ENCODE measurements at regions of chr1 and their contacts with region 1.

Region 1: GRCh38 chr1:185663332-185663731 is 70.9 kb upstream of the HMCN1 start:
- DNase-seq: no peak
- ATAC-seq: no peak
- H3K4me3 ChIP-seq: no peak overlapping the region
- H3K27ac ChIP-seq: no peak overlapping the region
- H3K4me1 ChIP-seq: no peaks in the 10 kb centered on the region
- H3K27me3 ChIP-seq: no peaks in the 10 kb centered on the region; the same call in 1 of the 2 replicates
- CTCF ChIP-seq: no peak
- POLR2A ChIP-seq: no peak
- RAD21 ChIP-seq: no peak

Region 2: GRCh38 chr1:185309566-185309965 is 353.8 kb before region 1 on chr1:
- CTCF ChIA-PET with region 1: no interaction called
- POLR2A ChIA-PET with region 1: no interaction called
- dilution Hi-C with region 1: no loop called
- in situ Hi-C with region 1: loop called (anchors 10 kb)
- intact Hi-C with region 1: no loop called
- DNase-seq: no peak
- ATAC-seq: no peak
- H3K4me3 ChIP-seq: no peak overlapping the region
- H3K27ac ChIP-seq: no peak overlapping the region
- H3K4me1 ChIP-seq: peaks cover 4% of the 10 kb centered on the region
- H3K27me3 ChIP-seq: no peaks in the 10 kb centered on the region
- CTCF ChIP-seq: no peak
- POLR2A ChIP-seq: no peak
- RAD21 ChIP-seq: no peak